ENCODE measurements at regions of chr12 and their contacts with region 1.

Region 1: GRCh38 chr12:78863482-78864402 is 832 bp upstream of the SYT1 start:
- DNase-seq: peak; percentile 83
- H3K4me3 ChIP-seq: peak overlapping the region; percentile 75
- H3K27ac ChIP-seq: peak overlapping the region; percentile 60
- H3K4me1 ChIP-seq: peaks cover 17% of the 10 kb centered on the region
- H3K27me3 ChIP-seq: no peaks in the 10 kb centered on the region
- CTCF ChIP-seq: no peak

Region 2: GRCh38 chr12:77521508-77522115 is 1342.1 kb before region 1 on chr12:
- CTCF ChIA-PET with region 1: no interaction called
- POLR2A ChIA-PET with region 1: no interaction called
- intact Hi-C with region 1: no loop called
- DNase-seq: no peak
- H3K4me3 ChIP-seq: no peak overlapping the region
- H3K27ac ChIP-seq: no peak overlapping the region
- H3K4me1 ChIP-seq: no peaks in the 10 kb centered on the region
- H3K27me3 ChIP-seq: no peaks in the 10 kb centered on the region
- CTCF ChIP-seq: no peak

Region 3: DNA sequence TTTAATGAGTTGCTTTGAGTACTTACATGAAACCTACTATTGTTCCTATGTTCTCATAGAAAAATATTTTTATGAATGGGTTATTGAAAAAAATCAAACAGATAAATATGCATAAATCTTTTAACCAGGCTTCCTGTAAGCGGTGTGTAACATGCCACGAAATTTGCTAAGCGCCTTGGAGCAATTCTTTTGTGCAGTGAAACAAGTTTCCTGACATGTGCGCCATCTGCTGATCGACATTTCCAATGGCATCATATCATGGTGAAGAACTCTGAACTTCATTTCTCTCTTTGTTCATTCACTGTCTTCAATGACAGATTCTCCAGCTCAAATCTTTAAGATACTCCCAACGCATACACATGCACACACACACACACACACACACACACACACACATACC is 1178.6 kb before region 1 on chr12:
- CTCF ChIA-PET with region 1: no interaction called
- POLR2A ChIA-PET with region 1: no interaction called
- intact Hi-C with region 1: no loop called
- DNase-seq: peak; percentile 88
- H3K4me3 ChIP-seq: no peak overlapping the region
- H3K27ac ChIP-seq: no peak overlapping the region
- H3K4me1 ChIP-seq: peaks cover 8% of the 10 kb centered on the region
- H3K27me3 ChIP-seq: no peaks in the 10 kb centered on the region
- CTCF ChIP-seq: peak; percentile 74

Region 4: GRCh38 chr12:78181544-78182162 is 682.1 kb before region 1 on chr12:
- CTCF ChIA-PET with region 1: no interaction called
- POLR2A ChIA-PET with region 1: no interaction called
- intact Hi-C with region 1: loop called (anchors 10 kb)
- DNase-seq: peak; percentile 60
- H3K4me3 ChIP-seq: no peak overlapping the region
- H3K27ac ChIP-seq: no peak overlapping the region
- H3K4me1 ChIP-seq: no peaks in the 10 kb centered on the region
- H3K27me3 ChIP-seq: no peaks in the 10 kb centered on the region
- CTCF ChIP-seq: peak; percentile 76

Region 5: GRCh38 chr12:78562368-78563205 is 301.2 kb before region 1 on chr12:
- CTCF ChIA-PET with region 1: no interaction called
- POLR2A ChIA-PET with region 1: no interaction called
- intact Hi-C with region 1: loop called (anchors 10 kb)
- DNase-seq: peak; percentile 69
- H3K4me3 ChIP-seq: no peak overlapping the region
- H3K27ac ChIP-seq: peak overlapping the region; percentile 1
- H3K4me1 ChIP-seq: peaks cover 39% of the 10 kb centered on the region
- H3K27me3 ChIP-seq: no peaks in the 10 kb centered on the region
- CTCF ChIP-seq: peak; percentile 77

Region 6: GRCh38 chr12:78636231-78636855 is 227.4 kb before region 1 on chr12:
- CTCF ChIA-PET with region 1: interaction called, 5 read pairs
- POLR2A ChIA-PET with region 1: no interaction called
- intact Hi-C with region 1: loop called (anchors 10 kb)
- DNase-seq: peak; percentile 83
- H3K4me3 ChIP-seq: no peak overlapping the region
- H3K27ac ChIP-seq: peak overlapping the region; percentile 49
- H3K4me1 ChIP-seq: peaks cover 28% of the 10 kb centered on the region
- H3K27me3 ChIP-seq: no peaks in the 10 kb centered on the region
- CTCF ChIP-seq: no peak

Region 7: GRCh38 chr12:78739653-78740052 is 124.1 kb before region 1 on chr12:
- CTCF ChIA-PET with region 1: no interaction called
- POLR2A ChIA-PET with region 1: no interaction called
- intact Hi-C with region 1: loop called (anchors 5 kb)
- DNase-seq: peak; percentile 89
- H3K4me3 ChIP-seq: peak overlapping the region; percentile 5
- H3K27ac ChIP-seq: peak overlapping the region; percentile 95
- H3K4me1 ChIP-seq: peaks cover 59% of the 10 kb centered on the region
- H3K27me3 ChIP-seq: no peaks in the 10 kb centered on the region
- CTCF ChIP-seq: no peak

Region 8: DNA sequence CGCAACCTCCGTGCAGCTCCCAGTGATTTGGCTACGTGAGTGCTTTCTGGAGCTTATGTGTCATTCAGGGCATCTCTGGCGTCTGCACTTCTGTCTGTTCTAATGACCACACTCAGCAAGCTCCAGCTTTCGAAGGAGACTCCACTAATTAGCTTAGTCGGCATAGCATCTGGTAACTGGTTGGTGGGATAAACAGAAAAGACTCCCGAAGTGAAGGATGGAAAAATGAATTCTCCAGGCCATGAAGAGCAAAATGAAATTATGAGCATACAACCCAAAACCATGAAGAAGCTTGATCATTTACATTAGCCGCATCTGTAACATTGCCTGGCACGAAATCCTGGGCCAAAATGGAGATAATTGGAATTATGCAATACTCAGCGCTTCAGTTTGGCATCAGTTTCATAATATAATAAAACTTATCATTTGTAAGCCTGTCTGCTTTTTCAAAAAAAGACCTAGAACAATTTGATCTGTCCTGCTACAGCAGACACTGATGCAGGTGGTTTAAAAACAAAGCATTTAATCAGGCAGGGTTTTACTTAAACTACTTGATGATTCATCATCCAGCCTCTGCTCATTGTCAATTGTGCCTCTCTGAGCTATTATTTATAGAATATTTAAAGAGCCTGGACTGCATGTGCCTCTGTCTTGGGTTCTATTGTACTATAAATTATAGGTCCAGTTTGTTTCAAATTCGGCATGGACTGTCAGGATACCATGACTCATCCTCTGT is 88.2 kb after region 1 on chr12:
- CTCF ChIA-PET with region 1: no interaction called
- POLR2A ChIA-PET with region 1: interaction called, 16 read pairs
- intact Hi-C with region 1: no loop called
- DNase-seq: peak; percentile 60
- H3K4me3 ChIP-seq: peak overlapping the region; percentile 3
- H3K27ac ChIP-seq: peak overlapping the region; percentile 12
- H3K4me1 ChIP-seq: peaks cover 27% of the 10 kb centered on the region
- H3K27me3 ChIP-seq: no peaks in the 10 kb centered on the region
- CTCF ChIP-seq: no peak

Region 9: GRCh38 chr12:78970041-78970440 is 106.3 kb after region 1 on chr12:
- CTCF ChIA-PET with region 1: no interaction called
- POLR2A ChIA-PET with region 1: no interaction called
- intact Hi-C with region 1: no loop called
- DNase-seq: no peak
- H3K4me3 ChIP-seq: no peak overlapping the region
- H3K27ac ChIP-seq: no peak overlapping the region
- H3K4me1 ChIP-seq: no peaks in the 10 kb centered on the region
- H3K27me3 ChIP-seq: no peaks in the 10 kb centered on the region
- CTCF ChIP-seq: no peak

Measured in A673 (cell line).